GM13977 (cell line): ENCODE measurements at regions of chrX and their contacts with region 1.

Region 1: GRCh38 chrX:136711147-136711546 is 63.2 kb downstream of the CD40LG start:
- DNase-seq: no peak
- CTCF ChIP-seq: peak; percentile 49

Region 2: DNA sequence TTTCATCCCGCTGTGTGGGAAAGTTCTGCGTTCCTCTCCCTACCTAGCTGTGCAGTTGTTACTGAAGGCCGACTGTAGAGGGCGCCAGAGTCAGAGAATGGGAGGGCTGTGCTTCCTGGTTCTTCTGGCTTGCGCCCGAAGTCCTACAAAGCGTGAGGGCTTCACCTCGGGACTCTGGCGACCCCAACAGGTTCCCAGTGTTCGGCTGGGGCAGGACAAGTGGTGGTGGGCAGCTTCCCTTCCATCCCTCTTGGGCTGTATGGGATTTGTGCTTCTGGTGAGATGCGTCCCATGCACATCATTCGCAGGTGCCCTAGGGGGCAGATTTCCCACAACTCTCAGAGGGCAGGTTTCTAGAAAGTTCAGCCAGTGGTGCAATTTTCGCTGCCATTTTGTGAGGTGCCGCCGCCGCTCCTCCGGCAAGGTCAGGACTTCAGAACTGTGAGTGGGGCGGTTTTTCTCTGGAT is 970.4 kb before region 1 on chrX:
- in situ Hi-C with region 1: no loop called
- DNase-seq: peak; percentile 44
- CTCF ChIP-seq: peak; percentile 66

Region 3: DNA sequence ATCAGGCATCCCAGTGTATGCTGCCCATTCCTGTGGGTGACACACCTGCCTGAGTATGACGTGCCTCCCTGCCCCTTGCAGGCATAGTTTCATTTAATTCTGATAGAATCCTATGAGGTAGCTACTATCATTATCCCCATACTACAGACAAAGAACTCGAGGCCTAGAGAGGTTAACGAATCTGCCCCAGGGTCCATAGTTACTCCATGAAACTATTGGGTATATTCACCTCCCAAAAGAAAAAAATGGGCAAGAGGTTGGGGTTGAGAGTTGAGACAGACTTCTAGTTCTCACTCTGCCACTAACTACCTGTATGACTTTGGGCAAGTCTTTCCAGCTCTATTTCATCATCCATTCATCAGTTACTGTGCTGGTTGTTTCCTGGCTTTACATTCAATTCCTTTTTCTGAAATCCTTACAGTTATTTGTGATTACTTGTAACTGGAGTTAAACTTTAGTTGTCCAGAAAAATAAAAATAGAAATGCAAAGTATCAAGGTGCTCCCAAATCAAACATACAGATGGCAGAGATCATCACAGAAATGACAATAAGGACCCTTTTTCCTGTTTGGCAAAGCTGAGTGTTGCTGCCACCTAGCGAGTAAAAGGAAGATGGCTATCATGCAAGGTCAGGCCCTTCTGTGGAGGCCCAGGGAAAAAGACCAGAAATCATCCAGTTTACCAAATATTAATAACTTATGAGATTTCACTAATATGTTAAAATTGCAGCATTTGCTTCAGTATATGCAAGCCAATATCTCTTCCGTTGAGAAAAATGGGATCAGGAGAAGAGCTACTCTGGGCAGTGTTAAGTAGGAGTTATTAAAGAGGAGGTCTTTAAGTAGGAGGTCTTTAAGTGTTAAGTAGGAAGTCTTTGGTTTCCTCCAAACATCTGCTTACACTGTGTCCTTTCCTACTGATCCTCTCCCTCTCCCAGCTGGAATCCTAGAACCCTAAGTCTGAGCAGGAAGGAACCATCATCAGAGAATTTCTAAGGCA is 442.8 kb before region 1 on chrX:
- in situ Hi-C with region 1: loop called (anchors 10 kb)
- DNase-seq: peak; percentile 30
- CTCF ChIP-seq: peak; percentile 82

Region 4: GRCh38 chrX:136866337-136867095 is 155.4 kb after region 1 on chrX:
- in situ Hi-C with region 1: no loop called
- DNase-seq: no peak
- CTCF ChIP-seq: no peak

Region 5: GRCh38 chrX:136892412-136892811 is 181.3 kb after region 1 on chrX:
- in situ Hi-C with region 1: no loop called
- DNase-seq: no peak
- CTCF ChIP-seq: no peak

Region 6: DNA sequence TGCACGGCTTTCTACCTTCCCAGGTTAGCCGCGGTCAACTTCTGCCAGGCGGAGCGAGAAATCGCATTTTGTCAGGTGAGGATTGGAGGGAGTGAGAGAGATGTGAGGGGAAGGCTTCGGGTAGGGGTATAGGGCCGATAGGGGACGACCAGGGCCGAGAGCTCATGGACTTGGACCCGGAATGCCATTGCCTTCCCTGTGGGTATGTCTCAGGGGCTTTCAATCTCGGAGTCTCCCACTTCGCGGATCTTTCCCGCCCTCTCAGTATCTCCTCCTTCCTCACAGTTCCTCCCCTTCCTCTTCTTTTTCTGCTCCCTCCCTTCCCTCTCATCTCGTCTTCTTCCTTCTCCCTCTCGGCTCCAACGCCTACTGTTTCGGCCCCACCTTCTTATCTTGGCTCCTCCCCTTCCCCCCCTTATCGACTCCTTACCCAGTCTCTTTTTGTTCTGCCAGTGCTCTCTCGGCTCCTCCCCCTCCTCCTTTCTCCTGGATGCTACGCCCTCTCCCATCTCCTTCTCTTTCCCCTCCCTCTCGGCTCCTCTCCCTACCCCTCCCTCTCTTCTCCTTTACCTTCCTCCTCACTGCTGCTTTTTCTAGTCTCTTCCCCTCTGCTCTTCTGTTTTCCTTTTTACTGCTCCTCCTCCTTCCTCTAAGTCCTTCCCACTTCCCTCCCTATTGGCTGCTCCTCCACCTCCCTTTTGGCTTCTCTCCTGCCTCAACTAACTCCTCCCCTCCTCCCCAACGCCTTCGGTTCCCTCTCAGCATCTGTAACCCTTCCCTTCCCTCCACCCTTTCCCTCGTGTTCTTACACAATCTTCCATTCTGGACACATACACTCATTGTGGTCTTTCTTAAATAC is 198.8 kb after region 1 on chrX:
- in situ Hi-C with region 1: loop called (anchors 25 kb)
- DNase-seq: peak; percentile 64
- CTCF ChIP-seq: no peak